ENCODE measurements at regions of chrX and their contacts with region 1.

Region 1: DNA sequence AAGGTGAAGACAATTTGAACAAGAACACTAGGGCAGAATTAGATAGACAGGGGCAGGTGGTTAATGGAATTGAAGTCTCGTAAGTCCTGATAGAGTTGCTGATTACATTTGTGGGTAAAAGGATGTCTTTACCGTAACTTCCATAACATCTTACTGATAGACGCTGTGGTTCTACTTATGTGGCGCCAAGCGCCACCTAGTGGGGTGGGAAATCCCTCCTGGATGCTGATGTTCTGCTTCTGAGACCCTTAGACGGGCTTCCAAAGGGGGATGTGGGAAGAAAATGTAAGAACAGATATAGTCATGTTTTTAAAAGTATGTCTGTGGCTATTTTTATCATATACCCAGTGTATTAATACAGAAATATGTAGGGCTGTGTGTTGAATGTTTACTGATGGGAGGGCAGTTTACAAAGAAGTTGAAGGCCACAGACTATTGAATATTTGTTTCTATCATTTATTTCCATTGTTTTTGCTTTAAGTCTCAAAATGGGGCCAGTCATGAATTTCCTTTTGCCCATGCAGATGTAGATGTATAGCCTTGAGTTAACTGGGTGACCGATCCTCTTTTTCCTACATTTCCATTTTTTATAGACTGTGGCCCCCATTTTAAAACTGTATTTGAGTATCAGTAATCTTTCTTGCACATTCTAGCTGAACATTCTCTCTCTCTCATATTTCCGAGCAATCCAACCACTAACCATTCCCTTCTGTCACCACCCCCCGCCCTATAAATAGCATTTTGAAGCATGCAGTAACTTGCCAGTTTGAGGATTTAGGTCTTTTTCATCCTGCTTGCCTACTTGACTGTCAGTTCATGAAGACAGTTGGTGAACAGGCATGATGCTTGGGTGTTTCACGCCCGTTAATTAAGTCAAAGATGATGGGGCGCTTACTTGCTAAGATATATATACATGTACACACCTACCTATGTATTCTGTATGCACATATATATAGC is 12.1 kb upstream of the TLR8 start:
- DNase-seq: peak; percentile 28
- ATAC-seq: peak; percentile 64; the same call in 2 of the 3 replicates
- H3K4me3 ChIP-seq: no peak overlapping the region
- H3K27ac ChIP-seq: no peak overlapping the region
- H3K4me1 ChIP-seq: no peaks in the 10 kb centered on the region
- H3K27me3 ChIP-seq: no peaks in the 10 kb centered on the region
- CTCF ChIP-seq: peak; percentile 70
- EP300 ChIP-seq: no peak
- POLR2A ChIP-seq: no peak
- RAD21 ChIP-seq: peak; percentile 46; the same call in 1 of the 2 replicates

Region 2: GRCh38 chrX:12657881-12658280 is 236.5 kb before region 1 on chrX:
- CTCF ChIA-PET with region 1: no interaction called
- POLR2A ChIA-PET with region 1: no interaction called
- in situ Hi-C with region 1: no loop called
- intact Hi-C with region 1: no loop called
- DNase-seq: no peak
- ATAC-seq: no peak
- H3K4me3 ChIP-seq: no peak overlapping the region
- H3K27ac ChIP-seq: no peak overlapping the region
- H3K4me1 ChIP-seq: no peaks in the 10 kb centered on the region
- H3K27me3 ChIP-seq: no peaks in the 10 kb centered on the region
- CTCF ChIP-seq: no peak
- EP300 ChIP-seq: no peak
- POLR2A ChIP-seq: no peak
- RAD21 ChIP-seq: no peak

Region 3: DNA sequence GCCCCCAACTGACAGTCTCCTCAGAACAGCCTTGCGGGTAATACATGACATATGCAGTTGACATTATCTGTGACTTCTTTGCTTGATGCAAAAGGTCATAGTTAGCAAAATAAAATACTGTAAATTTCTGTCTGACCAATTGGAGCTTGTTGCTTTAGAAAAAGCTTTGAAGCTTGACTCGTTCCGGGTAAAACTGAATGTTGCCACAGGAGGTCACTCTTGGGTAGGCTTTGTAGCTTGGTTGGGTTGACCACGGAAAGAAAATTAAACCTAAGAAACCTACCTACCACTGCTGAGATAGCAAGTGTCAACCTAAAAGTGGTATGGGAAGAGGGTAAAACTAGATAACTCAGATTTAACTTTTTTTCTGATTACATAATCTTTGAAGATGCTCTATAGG is 79.9 kb before region 1 on chrX:
- CTCF ChIA-PET with region 1: interaction called, 58 read pairs
- POLR2A ChIA-PET with region 1: no interaction called
- in situ Hi-C with region 1: no loop called
- intact Hi-C with region 1: loop called (anchors 1 kb)
- DNase-seq: peak; percentile 29
- ATAC-seq: peak; percentile 56
- H3K4me3 ChIP-seq: no peak overlapping the region
- H3K27ac ChIP-seq: no peak overlapping the region
- H3K4me1 ChIP-seq: no peaks in the 10 kb centered on the region
- H3K27me3 ChIP-seq: no peaks in the 10 kb centered on the region
- CTCF ChIP-seq: peak; percentile 71
- EP300 ChIP-seq: no peak
- POLR2A ChIP-seq: no peak
- RAD21 ChIP-seq: peak; percentile 71

Region 4: GRCh38 chrX:12824944-12825343 is 69.4 kb before region 1 on chrX:
- CTCF ChIA-PET with region 1: no interaction called
- POLR2A ChIA-PET with region 1: no interaction called
- in situ Hi-C with region 1: loop called (anchors 5 kb)
- intact Hi-C with region 1: no loop called
- DNase-seq: no peak
- ATAC-seq: no peak
- H3K4me3 ChIP-seq: no peak overlapping the region
- H3K27ac ChIP-seq: no peak overlapping the region
- H3K4me1 ChIP-seq: no peaks in the 10 kb centered on the region
- H3K27me3 ChIP-seq: no peaks in the 10 kb centered on the region
- CTCF ChIP-seq: no peak
- EP300 ChIP-seq: no peak
- POLR2A ChIP-seq: no peak
- RAD21 ChIP-seq: no peak

Region 5: GRCh38 chrX:13048280-13048679 is 153.9 kb after region 1 on chrX:
- CTCF ChIA-PET with region 1: no interaction called
- POLR2A ChIA-PET with region 1: no interaction called
- in situ Hi-C with region 1: no loop called
- intact Hi-C with region 1: no loop called
- DNase-seq: no peak
- ATAC-seq: no peak
- H3K4me3 ChIP-seq: no peak overlapping the region
- H3K27ac ChIP-seq: no peak overlapping the region
- H3K4me1 ChIP-seq: no peaks in the 10 kb centered on the region
- H3K27me3 ChIP-seq: no peaks in the 10 kb centered on the region
- CTCF ChIP-seq: no peak
- EP300 ChIP-seq: no peak
- POLR2A ChIP-seq: no peak
- RAD21 ChIP-seq: no peak

Region 6: GRCh38 chrX:13334491-13334890 is 440.1 kb after region 1 on chrX:
- CTCF ChIA-PET with region 1: no interaction called
- POLR2A ChIA-PET with region 1: no interaction called
- in situ Hi-C with region 1: no loop called
- intact Hi-C with region 1: no loop called
- DNase-seq: no peak
- ATAC-seq: no peak
- H3K4me3 ChIP-seq: no peak overlapping the region
- H3K27ac ChIP-seq: no peak overlapping the region
- H3K4me1 ChIP-seq: no peaks in the 10 kb centered on the region
- H3K27me3 ChIP-seq: no peaks in the 10 kb centered on the region
- CTCF ChIP-seq: no peak
- EP300 ChIP-seq: no peak
- POLR2A ChIP-seq: no peak
- RAD21 ChIP-seq: no peak

Measured in HepG2 (cell line).